Activated naive CD4-positive, alpha-beta T cell treated with anti-CD3 and anti-CD28 coated beads for 36 hours (primary cell): ENCODE measurements at regions of chr19 and their contacts with region 1.

Region 1: DNA sequence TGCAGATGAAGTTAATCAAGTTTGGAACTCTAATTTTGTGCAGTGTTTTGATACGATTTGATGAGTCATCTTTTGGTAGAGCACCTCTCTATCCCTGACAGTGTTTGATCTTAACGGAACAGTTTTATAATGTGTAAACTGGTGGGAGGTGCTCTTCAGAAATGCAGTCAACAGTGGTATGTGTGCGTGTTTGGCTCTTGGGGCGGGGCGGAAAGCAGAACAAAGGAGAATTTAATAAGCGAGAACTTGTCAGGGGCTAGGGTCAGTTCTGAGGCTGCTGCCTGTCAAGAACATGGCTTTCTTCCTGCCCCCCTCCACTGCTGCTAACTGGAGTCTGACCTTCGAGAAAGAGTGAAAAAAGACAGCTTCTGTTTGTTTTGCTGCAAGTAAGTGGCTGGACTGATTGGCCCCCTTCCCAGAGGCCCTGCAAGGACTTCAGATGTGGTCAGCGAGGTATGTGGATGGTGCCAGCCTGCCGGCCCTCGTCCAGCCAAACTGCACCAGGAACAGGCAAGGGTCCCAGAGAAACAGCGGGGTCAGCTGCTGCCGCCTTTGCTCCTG is 40.8 kb downstream of the BBC3 start:
- DNase-seq: peak; percentile 87
- H3K4me3 Mint-ChIP-seq: peak overlapping the region; percentile 38
- H3K27ac Mint-ChIP-seq: peak overlapping the region; percentile 76
- H3K4me1 Mint-ChIP-seq: peaks cover 73% of the 10 kb centered on the region
- H3K27me3 Mint-ChIP-seq: no peaks in the 10 kb centered on the region

Region 2: DNA sequence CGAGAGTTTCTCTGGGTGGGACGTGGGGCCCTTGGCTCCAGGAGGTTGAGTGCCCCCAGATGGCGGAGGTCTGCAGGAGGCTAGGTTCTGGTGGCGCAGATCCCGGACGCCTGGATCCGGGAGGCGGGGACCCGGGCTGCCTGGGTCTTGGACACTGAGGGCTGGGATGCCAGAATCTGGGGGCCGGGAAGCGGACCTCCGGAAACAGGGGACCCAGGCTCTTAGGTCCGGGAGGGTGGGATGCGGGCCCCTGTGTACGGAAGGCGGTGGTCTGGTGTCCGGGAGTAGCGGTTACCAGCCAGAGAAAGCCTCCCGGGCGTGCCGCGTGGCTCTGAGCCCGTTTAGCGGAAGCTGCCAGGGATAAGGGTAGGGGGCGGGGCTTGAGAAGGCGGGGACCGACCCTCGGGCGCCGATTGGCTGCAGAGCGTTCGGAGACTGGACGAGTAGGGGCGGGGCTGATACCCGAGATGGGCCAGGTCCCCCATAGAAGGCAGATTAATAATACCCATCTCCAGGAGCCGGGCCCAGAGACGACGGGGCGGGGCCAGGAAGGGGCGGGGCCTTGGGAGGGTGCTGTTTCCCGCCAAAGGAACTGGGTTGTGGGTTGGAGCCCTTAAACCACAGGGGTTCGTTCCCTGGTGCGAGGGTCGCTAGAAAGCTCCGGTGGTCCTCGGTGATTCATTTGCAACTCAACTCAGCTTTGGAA is 401.8 kb before region 1 on chr19 and contains the start of gene SLC1A5:
- CTCF ChIA-PET with region 1: no interaction called
- intact Hi-C with region 1: loop called (anchors 5 kb)
- DNase-seq: peak; percentile 99
- H3K4me3 Mint-ChIP-seq: peak within 1 kb of the TSS; percentile 95
- H3K27ac Mint-ChIP-seq: peak within 1 kb of the TSS; percentile 99
- H3K4me1 Mint-ChIP-seq: peaks cover 38% of the 10 kb centered on the region
- H3K27me3 Mint-ChIP-seq: no peaks in the 10 kb centered on the region
- total RNA-seq, gene SLC1A5: 139 TPM

Region 3: GRCh38 chr19:47063874-47064273 is 126.4 kb before region 1 on chr19:
- CTCF ChIA-PET with region 1: no interaction called
- intact Hi-C with region 1: no loop called
- DNase-seq: no peak
- H3K4me3 Mint-ChIP-seq: no peak overlapping the region
- H3K27ac Mint-ChIP-seq: no peak overlapping the region
- H3K4me1 Mint-ChIP-seq: no peaks in the 10 kb centered on the region
- H3K27me3 Mint-ChIP-seq: no peaks in the 10 kb centered on the region

Region 4: DNA sequence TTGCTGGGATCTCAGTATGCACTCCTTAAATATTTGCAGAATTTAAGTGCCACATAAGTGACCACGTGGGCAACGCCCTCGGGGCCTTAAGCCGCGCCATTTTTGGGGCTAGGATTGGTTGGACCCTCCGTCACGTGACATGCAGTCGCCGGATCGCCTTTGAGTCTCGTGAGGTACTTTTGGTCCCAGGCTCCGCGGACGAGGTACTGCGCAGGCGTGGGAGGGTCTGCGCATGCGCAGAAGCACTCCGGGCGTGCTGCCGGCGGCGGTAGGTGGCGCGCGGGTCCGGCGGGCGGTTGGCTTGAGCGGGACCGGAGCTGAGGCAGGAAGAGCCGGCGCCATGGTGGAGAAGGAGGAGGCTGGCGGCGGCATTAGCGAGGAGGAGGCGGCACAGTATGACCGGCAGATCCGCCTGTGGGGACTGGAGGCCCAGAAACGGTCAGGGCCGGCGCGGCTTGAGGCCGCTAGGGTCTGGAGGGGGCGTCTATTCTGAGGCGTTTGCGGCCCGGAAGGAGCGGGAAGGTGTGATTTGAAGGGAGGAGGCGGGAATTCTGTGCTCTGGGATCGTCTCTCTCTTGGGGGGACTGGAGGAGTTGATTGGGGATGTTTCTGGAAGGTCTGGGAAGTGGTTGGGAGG is 59.5 kb before region 1 on chr19 and contains the start of gene SAE1:
- CTCF ChIA-PET with region 1: interaction called, 8 read pairs
- intact Hi-C with region 1: loop called (anchors 1 kb)
- DNase-seq: peak; percentile 95
- H3K4me3 Mint-ChIP-seq: peak within 1 kb of the TSS; percentile 99
- H3K27ac Mint-ChIP-seq: peak within 1 kb of the TSS; percentile 99
- H3K4me1 Mint-ChIP-seq: peaks cover 41% of the 10 kb centered on the region
- H3K27me3 Mint-ChIP-seq: no peaks in the 10 kb centered on the region
- total RNA-seq, gene SAE1: 160 to 161 TPM

Region 5: GRCh38 chr19:47157431-47158321 is 32.6 kb before region 1 on chr19:
- CTCF ChIA-PET with region 1: interaction called, 38 read pairs
- intact Hi-C with region 1: loop called (anchors 1 kb)
- DNase-seq: peak; percentile 69
- H3K4me3 Mint-ChIP-seq: peak overlapping the region; percentile 57
- H3K27ac Mint-ChIP-seq: peak overlapping the region; percentile 98
- H3K4me1 Mint-ChIP-seq: peaks cover 76% of the 10 kb centered on the region
- H3K27me3 Mint-ChIP-seq: no peaks in the 10 kb centered on the region

Region 6: GRCh38 chr19:47225746-47226425 is 35.6 kb after region 1 on chr19:
- CTCF ChIA-PET with region 1: interaction called, 5 read pairs
- intact Hi-C with region 1: loop called (anchors 1 kb)
- DNase-seq: peak; percentile 83
- H3K4me3 Mint-ChIP-seq: peak overlapping the region; percentile 83
- H3K27ac Mint-ChIP-seq: peak overlapping the region; percentile 67
- H3K4me1 Mint-ChIP-seq: peaks cover 10% of the 10 kb centered on the region
- H3K27me3 Mint-ChIP-seq: no peaks in the 10 kb centered on the region

Region 7: DNA sequence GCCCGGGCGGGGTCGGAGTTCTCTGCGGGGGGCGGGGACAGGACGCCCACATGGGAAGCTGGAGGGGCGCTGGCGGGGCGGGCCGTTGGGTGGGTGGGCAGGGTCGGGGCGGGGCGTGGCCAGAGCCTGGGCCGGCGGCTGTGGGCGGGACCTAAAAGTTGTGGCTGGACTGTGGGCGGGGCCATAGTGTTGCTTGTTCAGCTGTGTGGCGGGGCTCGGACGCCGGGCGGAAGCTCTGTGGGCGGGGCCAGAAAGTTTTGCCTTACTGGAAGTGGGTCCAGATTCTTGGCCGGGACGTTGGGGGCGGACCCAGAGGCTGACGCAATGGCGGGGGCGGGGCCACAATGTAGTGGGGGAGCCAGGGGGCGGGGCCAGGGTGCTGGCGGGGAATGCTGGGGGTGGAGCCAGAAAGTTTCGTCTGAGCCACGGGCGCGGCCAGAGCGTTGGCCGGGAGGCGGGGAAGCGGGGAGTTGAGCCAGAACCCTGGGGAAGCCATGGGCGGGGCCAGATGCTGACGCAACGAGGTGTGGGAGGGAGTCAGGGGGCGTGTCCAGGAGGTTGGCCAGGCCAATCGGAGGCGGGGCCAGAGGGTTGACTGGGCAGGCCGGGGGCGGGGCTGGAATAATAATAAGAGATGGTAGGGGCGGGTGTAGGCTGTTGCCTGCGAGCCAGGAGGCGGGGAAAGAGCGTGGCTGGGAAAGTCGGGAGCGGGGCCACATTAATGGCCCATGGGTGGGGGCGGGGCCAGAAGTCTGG is 66.6 kb after region 1 on chr19:
- CTCF ChIA-PET with region 1: no interaction called
- intact Hi-C with region 1: loop called (anchors 1 kb)
- DNase-seq: peak; percentile 100
- H3K4me3 Mint-ChIP-seq: peak overlapping the region; percentile 88
- H3K27ac Mint-ChIP-seq: peak overlapping the region; percentile 96
- H3K4me1 Mint-ChIP-seq: peaks cover 39% of the 10 kb centered on the region
- H3K27me3 Mint-ChIP-seq: no peaks in the 10 kb centered on the region